Dorsolateral prefrontal cortex (tissue), 120 donors: ENCODE measurements at regions of chr5 and their contacts with region 1.

Region 1: DNA sequence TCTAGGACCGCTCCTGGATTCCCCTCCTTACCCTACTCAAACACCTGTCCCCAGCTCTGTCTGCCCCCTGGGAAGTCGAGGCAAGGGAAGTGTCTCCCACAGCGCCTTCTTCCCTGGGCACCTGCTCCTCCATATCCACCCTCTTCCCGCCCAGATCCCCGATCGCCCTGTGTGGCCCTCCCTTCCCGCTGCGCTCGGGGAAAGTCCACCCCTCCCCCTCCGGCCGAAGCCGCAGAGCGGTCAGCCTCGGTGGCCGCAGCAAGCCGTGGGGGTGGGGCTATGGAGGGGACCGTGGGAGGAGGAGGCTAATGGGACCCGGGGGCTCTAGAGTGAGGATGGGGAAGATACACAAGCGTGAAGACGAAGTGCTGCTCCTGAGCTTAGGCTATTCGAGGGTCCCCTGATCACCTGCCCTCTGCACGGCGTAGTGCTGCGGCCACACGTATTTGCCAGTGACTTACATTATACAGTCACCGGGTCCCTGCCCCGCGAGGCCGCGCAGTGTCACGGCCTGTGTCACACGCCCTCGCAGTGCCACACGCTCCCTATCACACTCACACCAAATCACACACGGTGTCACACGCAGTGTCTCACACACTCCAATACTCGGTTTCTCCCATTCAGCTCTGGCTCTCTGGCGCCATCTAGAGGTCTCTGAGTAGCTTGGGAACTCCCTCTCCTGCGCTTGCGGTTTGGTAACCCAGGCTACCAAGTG is 658 bp upstream of the PCDH1 start:
- DNase-seq: peak; percentile 82 to 97 (median 94)
- H3K4me3 ChIP-seq: peak overlapping the region; percentile 65 to 97 (median 87)
- H3K27ac ChIP-seq: peak overlapping the region; percentile 90 to 99 (median 98)
- H3K27me3 ChIP-seq: no peaks in the 10 kb centered on the region
- CTCF ChIP-seq: peak; percentile 88 to 99 (median 98)

Region 2: DNA sequence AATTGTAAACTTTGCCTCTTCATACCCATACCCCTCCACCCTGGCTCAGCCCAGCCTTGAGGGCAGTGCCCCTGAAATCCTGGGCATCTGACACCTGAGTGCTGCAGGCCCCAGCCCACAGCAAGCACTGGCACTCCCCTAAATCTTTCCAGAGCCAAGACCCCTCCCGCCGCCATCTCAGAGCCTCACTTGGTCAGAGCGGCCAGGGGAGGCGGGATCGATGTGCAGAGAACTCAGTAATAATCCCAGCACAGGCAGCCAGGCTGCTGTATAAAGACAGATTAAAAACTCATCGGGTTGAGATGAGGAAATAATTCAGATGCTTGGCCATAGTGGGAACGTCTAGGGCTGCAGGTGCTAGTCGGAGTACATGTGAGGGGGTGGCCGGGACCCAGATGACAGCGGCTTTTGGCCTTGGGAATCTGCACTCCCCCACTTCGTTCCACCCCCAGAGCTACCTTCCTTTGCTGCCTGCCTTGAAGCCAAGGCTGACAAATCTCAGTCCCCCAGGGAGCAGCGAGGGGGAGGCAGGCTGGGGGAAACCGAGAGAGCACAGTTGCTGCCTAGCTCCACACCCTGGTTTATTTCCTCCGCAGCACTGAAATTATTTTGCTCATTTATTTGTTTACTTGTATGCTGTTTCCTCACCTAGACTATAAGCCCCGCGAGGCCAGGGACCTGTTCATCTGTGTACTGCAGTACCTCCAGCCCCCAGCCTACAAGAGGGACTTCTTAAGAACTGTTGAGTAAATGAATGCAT is 177.3 kb before region 1 on chr5:
- intact Hi-C with region 1: loop called (anchors 1 to 2 kb)
- DNase-seq: peak in 2 of 10 donors; percentile 55 to 69
- H3K4me3 ChIP-seq: peak overlapping the region in 55 of 59 donors; percentile 11 to 88 (median 64)
- H3K27ac ChIP-seq: peak overlapping the region in 56 of 59 donors; percentile 5 to 93 (median 84)
- H3K27me3 ChIP-seq: no peaks in the 10 kb centered on the region
- CTCF ChIP-seq: no peak

Region 3: GRCh38 chr5:141811287-141812155 is 67.3 kb before region 1 on chr5:
- intact Hi-C with region 1: loop called in 1 of 2 experiments (anchors 2 kb)
- DNase-seq: peak; percentile 45 to 81 (median 68)
- H3K4me3 ChIP-seq: peak overlapping the region in 48 of 59 donors; percentile 4 to 53 (median 32)
- H3K27ac ChIP-seq: peak overlapping the region in 52 of 59 donors; percentile 16 to 84 (median 69)
- H3K27me3 ChIP-seq: no peaks in the 10 kb centered on the region
- CTCF ChIP-seq: peak in 55 of 56 donors; percentile 25 to 71 (median 57)

Region 4: GRCh38 chr5:141849375-141850243 is 29.3 kb before region 1 on chr5:
- intact Hi-C with region 1: loop called in 1 of 2 experiments (anchors 1 kb)
- DNase-seq: peak; percentile 76 to 91 (median 84)
- H3K4me3 ChIP-seq: peak overlapping the region; percentile 46 to 93 (median 77)
- H3K27ac ChIP-seq: peak overlapping the region; percentile 90 to 100 (median 99)
- H3K27me3 ChIP-seq: no peaks in the 10 kb centered on the region
- CTCF ChIP-seq: peak in 29 of 56 donors; percentile 5 to 49 (median 26)

Region 5: GRCh38 chr5:141923448-141924352 is 44.8 kb after region 1 on chr5 and contains the start of gene DELE1:
- intact Hi-C with region 1: loop called (anchors 2 to 5 kb)
- DNase-seq: peak; percentile 81 to 95 (median 94)
- H3K4me3 ChIP-seq: peak within 1 kb of the TSS; percentile 59 to 99 (median 82)
- H3K27ac ChIP-seq: peak within 1 kb of the TSS; percentile 79 to 100 (median 96)
- H3K27me3 ChIP-seq: no peaks in the 10 kb centered on the region
- CTCF ChIP-seq: peak in 38 of 56 donors; percentile 3 to 60 (median 26)
- total RNA-seq, gene DELE1: 54.4 to 110 (median 82.7) TPM

Region 6: DNA sequence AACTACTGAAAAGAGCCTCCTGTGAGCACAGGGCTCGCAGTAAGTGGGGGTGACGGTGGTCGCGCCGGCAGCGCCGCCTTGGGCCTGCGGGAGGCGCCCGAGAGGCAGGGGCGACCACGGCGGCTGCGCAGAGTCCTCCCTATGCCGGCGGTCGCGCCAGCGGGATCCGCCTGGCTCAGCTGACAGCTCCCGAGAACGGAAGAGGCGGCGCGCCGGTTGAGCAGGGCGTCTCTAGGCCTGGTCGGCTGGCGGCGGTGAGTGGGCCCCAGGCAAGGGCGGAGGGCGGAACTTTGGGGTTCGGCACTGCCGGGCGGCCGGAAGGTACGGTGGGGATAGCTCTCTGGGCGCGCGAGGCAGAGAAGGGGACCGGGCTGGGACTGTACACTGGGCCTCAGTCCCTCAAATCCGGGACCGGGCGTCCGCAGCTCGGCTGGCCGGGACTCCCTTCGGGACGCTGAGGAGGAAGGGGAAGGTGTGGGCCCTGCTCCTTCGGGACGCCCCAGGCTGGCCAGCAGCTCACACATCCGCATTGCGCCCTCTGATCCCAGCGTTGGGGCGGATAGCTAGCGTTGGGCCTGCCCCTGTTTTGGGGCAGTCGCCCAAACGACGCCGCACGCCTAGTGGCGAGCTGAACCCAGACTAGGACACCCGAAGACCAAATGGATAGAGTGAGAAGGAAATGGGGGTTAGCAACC is 90.2 kb after region 1 on chr5 and contains the start of gene RNF14:
- intact Hi-C with region 1: loop called (anchors 5 kb)
- DNase-seq: peak; percentile 72 to 93 (median 90)
- H3K4me3 ChIP-seq: peak within 1 kb of the TSS; percentile 63 to 98 (median 83)
- H3K27ac ChIP-seq: peak within 1 kb of the TSS; percentile 44 to 98 (median 91)
- H3K27me3 ChIP-seq: no peaks in the 10 kb centered on the region
- CTCF ChIP-seq: peak; percentile 82 to 99 (median 96)
- total RNA-seq, gene RNF14: 48.7 to 113 (median 81.7) TPM